ENCODE measurements at regions of chr6 and their contacts with region 1.

Region 1: DNA sequence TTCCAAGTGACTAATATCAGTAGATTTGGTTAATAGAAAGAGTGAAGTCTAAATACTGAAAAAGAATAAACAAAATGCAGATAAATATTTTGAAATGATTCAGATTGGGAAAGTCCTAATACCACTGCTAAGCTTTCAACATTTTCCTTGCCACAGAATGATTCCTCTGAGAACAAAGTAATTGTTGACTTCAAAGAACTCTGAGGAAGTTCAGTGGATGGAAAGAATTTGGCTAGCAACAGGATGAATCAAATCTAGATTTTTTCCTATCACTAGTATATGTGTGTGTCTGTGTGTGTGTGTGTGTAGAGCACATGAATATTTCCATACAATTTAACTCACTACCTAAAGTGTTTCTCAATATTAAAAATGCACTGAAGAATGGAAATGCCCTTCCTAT is 107.9 kb upstream of the PREP start:
- DNase-seq: no peak
- H3K4me3 Mint-ChIP-seq: no peak overlapping the region
- H3K27ac Mint-ChIP-seq: no peak overlapping the region
- H3K4me1 Mint-ChIP-seq: peaks cover 2% of the 10 kb centered on the region
- H3K27me3 Mint-ChIP-seq: peaks cover 26% of the 10 kb centered on the region

Region 2: GRCh38 chr6:105474234-105474633 is 36.5 kb before region 1 on chr6:
- CTCF ChIA-PET with region 1: no interaction called
- POLR2A ChIA-PET with region 1: no interaction called
- DNase-seq: no peak
- H3K4me3 Mint-ChIP-seq: no peak overlapping the region
- H3K27ac Mint-ChIP-seq: no peak overlapping the region
- H3K4me1 Mint-ChIP-seq: no peaks in the 10 kb centered on the region
- H3K27me3 Mint-ChIP-seq: peaks cover 56% of the 10 kb centered on the region

Region 3: DNA sequence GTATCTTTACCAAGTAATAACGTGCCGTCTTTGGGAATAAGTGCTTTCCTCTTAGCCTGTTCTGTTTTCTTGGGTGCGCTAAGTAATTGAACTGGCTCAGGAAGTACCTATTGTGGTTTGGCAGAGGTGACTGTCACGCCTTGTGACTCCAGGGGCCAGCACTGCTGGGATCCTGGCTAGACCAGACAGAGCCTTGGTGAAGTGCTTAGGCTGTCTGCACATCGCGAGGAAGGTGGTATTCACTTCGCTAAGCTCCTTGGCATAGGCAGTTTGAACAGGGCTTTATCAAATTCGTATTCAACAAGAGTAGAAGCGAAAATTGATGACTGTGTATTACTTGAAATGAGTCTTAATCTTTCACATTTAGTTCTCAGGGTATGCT is 593.0 kb after region 1 on chr6:
- CTCF ChIA-PET with region 1: no interaction called
- POLR2A ChIA-PET with region 1: interaction called, 10 read pairs
- DNase-seq: peak; percentile 42
- H3K4me3 Mint-ChIP-seq: peak overlapping the region; percentile 84
- H3K27ac Mint-ChIP-seq: peak overlapping the region; percentile 83
- H3K4me1 Mint-ChIP-seq: peaks cover 83% of the 10 kb centered on the region
- H3K27me3 Mint-ChIP-seq: no peaks in the 10 kb centered on the region

Measured in activated CD4-positive, alpha-beta T cell treated with anti-CD3 and anti-CD28 coated beads, Interleukin-2, amount 10 ng/mL, durations not matched to agents 7 days and 5 days (primary cell).